ENCODE measurements at regions of chr17 and their contacts with region 1.

Region 1: GRCh38 chr17:3949418-3949817 is 14.8 kb downstream of the ATP2A3 start:
- DNase-seq: no peak
- ATAC-seq: no peak
- H3K4me3 ChIP-seq: no peak overlapping the region
- H3K27ac ChIP-seq: no peak overlapping the region
- H3K4me1 ChIP-seq: no peaks in the 10 kb centered on the region
- H3K27me3 ChIP-seq: no peaks in the 10 kb centered on the region
- CTCF ChIP-seq: no peak
- POLR2A ChIP-seq: no peak
- RAD21 ChIP-seq: no peak

Region 2: GRCh38 chr17:3927628-3928340 is 21.6 kb before region 1 on chr17:
- CTCF ChIA-PET with region 1: no interaction called
- POLR2A ChIA-PET with region 1: interaction called, 10 read pairs
- dilution Hi-C with region 1: no loop called
- in situ Hi-C with region 1: no loop called
- intact Hi-C with region 1: no loop called
- DNase-seq: no peak
- ATAC-seq: no peak
- H3K4me3 ChIP-seq: no peak overlapping the region
- H3K27ac ChIP-seq: no peak overlapping the region
- H3K4me1 ChIP-seq: peaks cover 3% of the 10 kb centered on the region; the same call in 1 of the 2 replicates
- H3K27me3 ChIP-seq: peaks cover 5% of the 10 kb centered on the region; the same call in 1 of the 2 replicates
- CTCF ChIP-seq: no peak
- POLR2A ChIP-seq: no peak
- RAD21 ChIP-seq: no peak